Gastrocnemius medialis (tissue), 4 donors: ENCODE measurements at regions of chr10 and their contacts with region 1.

Region 1: GRCh38 chr10:96395931-96396877 is 37.4 kb upstream of the OPALIN start:
- DNase-seq: peak; percentile 45 to 49
- ATAC-seq: peak; percentile 60 to 77
- H3K4me3 ChIP-seq: no peak overlapping the region
- H3K27ac ChIP-seq: no peak overlapping the region
- H3K4me1 ChIP-seq: peaks cover 0 to under 1% of the 10 kb centered on the region in 2 donors
- H3K27me3 ChIP-seq: peaks cover 0 to 15% (median 0%) of the 10 kb centered on the region in 3 donors
- CTCF ChIP-seq: peak; percentile 69 to 85 (median 78)
- POLR2A ChIP-seq: no peak

Region 2: GRCh38 chr10:96743988-96744585 is 347.9 kb after region 1 on chr10:
- in situ Hi-C with region 1: no loop called
- intact Hi-C with region 1: loop called (anchors 10 kb)
- DNase-seq: no peak
- ATAC-seq: no peak
- H3K4me3 ChIP-seq: no peak overlapping the region
- H3K27ac ChIP-seq: no peak overlapping the region
- H3K4me1 ChIP-seq: no peaks in the 10 kb centered on the region
- H3K27me3 ChIP-seq: no peaks in the 10 kb centered on the region
- CTCF ChIP-seq: no peak
- POLR2A ChIP-seq: no peak